CD8-positive, alpha-beta T cell (primary cell): ENCODE measurements at regions of chr1 and their contacts with region 1.

Region 1: GRCh38 chr1:15568387-15569073 is 16.3 kb downstream of the AGMAT start:
- DNase-seq: no peak
- ATAC-seq: no peak
- H3K4me3 ChIP-seq: no peak overlapping the region
- H3K4me3 Mint-ChIP-seq: no peak overlapping the region
- H3K27ac ChIP-seq: no peak overlapping the region
- H3K27ac Mint-ChIP-seq: peak overlapping the region; percentile 11
- H3K4me1 ChIP-seq: no peaks in the 10 kb centered on the region
- H3K4me1 Mint-ChIP-seq: peaks cover 2% of the 10 kb centered on the region
- H3K27me3 ChIP-seq: no peaks in the 10 kb centered on the region
- H3K27me3 Mint-ChIP-seq: no peaks in the 10 kb centered on the region
- CTCF ChIP-seq: no peak

Region 2: GRCh38 chr1:15578921-15579682 is 10.6 kb after region 1 on chr1:
- CTCF ChIA-PET with region 1: no interaction called
- POLR2A ChIA-PET with region 1: interaction called, 12 read pairs
- intact Hi-C with region 1: no loop called
- DNase-seq: peak; percentile 17 to 76 (median 42)
- ATAC-seq: peak; percentile 87
- H3K4me3 ChIP-seq: peak overlapping the region in 1 of 2 experiments; percentile 29
- H3K4me3 Mint-ChIP-seq: peak overlapping the region; percentile 69
- H3K27ac ChIP-seq: peak overlapping the region; percentile 55 to 81
- H3K27ac Mint-ChIP-seq: peak overlapping the region; percentile 94
- H3K4me1 ChIP-seq: peaks cover 49% of the 10 kb centered on the region
- H3K4me1 Mint-ChIP-seq: peaks cover 50% of the 10 kb centered on the region
- H3K27me3 ChIP-seq: no peaks in the 10 kb centered on the region
- H3K27me3 Mint-ChIP-seq: no peaks in the 10 kb centered on the region
- CTCF ChIP-seq: no peak